OCI-LY7 (cell line): ENCODE measurements at regions of chr2 and their contacts with region 1.

Region 1: DNA sequence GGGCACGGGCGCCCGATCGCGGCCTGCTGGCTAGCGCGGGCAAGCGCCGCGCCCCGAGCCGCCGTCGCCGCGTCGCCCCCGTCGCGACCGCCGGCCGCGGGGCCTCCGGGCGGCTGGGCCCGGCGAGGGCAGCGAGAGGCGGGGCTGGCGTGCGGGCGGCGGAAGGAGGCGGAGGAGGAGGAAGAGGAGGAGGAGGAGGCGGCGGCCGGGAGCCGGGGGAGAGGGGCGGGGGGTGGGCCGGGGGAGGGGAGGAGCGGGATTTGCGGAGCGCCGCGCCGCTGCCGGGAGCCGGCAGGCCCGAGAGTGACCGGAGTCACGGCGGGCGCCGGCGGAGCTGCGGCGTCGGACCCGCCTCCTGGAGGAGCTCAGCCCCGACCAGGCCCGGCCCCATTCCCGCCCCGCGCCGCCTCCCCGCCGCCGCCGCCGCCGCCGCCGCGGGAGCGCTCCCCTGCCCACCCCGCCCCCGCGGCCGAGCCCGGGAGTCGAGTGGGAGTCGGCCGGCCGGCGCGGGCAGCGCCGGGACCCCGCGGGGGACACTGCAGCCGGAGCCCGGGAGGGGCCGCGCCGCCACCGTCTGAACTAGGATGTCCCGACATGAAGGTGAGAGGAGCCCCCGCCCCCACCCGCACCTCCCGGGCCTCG is at the start of gene KCMF1:
- DNase-seq: peak; percentile 72
- H3K4me3 ChIP-seq: peak within 1 kb of the TSS; percentile 82
- H3K27ac ChIP-seq: peak within 1 kb of the TSS; percentile 85
- H3K4me1 ChIP-seq: peaks cover 22% of the 10 kb centered on the region
- CTCF ChIP-seq: no peak
- total RNA-seq, gene KCMF1: 42.2 and 63.0 TPM in 2 replicates

Region 2: GRCh38 chr2:84946204-84947009 is 24.6 kb before region 1 on chr2:
- CTCF ChIA-PET with region 1: interaction called, 6 read pairs
- POLR2A ChIA-PET with region 1: interaction called, 107 read pairs
- intact Hi-C with region 1: loop called (anchors 1 kb)
- DNase-seq: peak; percentile 70
- H3K4me3 ChIP-seq: peak overlapping the region; percentile 42
- H3K27ac ChIP-seq: peak overlapping the region; percentile 75
- H3K4me1 ChIP-seq: peaks cover 41% of the 10 kb centered on the region
- CTCF ChIP-seq: peak; percentile 54

Region 3: DNA sequence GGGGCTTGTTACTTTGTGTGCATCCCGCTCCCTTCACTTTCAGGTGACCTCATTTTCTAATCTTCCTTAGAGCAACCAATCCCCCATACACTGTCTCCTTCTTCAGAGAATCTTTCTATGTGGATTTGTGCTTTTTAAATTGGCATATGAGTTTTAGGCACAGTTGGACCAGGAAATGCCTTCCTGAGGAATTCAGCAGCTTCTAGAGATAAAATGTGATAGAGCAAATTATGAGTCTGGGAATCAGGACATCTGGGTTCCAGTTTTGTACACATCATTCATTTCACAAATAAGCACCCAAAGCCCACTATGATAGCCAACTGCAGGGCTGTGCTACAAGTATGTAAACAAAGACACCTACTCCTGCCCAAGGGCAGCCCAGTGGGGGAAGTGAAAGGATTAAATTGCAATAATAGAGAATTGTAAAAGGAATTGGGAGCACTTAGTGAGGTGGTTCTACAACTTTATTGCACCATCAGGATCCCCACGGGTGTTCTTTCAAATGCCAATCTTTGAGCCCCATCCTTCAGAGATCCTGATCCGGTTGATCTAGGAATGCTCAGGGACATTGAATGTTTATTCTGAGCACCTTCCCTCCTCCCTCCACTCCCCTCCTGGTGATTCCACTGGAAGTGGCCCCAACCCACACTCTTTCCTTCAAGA is 11.4 kb before region 1 on chr2:
- CTCF ChIA-PET with region 1: interaction called, 3 read pairs
- POLR2A ChIA-PET with region 1: interaction called, 11 read pairs
- intact Hi-C with region 1: no loop called
- DNase-seq: no peak
- H3K4me3 ChIP-seq: no peak overlapping the region
- H3K27ac ChIP-seq: no peak overlapping the region
- H3K4me1 ChIP-seq: no peaks in the 10 kb centered on the region
- CTCF ChIP-seq: no peak

Region 4: DNA sequence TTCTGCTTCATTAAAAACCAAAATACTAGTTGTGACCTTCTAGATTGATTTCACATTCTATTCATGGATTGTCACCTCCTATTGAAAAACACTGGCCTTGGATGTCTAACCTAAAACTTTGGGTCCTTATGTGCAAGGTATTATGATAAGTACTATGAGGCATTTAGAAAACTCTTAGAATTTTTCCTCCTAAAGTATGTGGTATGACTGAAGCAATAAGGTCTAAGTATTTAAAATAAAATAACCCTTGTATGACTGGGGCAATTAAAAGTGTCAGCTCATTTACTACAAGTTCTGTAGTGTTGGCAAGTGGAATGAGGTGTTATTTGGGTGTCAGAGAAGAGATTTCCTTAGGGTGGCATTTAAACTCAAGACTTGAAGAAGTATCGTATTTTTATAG is 15.0 kb after region 1 on chr2:
- CTCF ChIA-PET with region 1: no interaction called
- POLR2A ChIA-PET with region 1: interaction called, 12 read pairs
- intact Hi-C with region 1: no loop called
- DNase-seq: no peak
- H3K4me3 ChIP-seq: no peak overlapping the region
- H3K27ac ChIP-seq: no peak overlapping the region
- H3K4me1 ChIP-seq: no peaks in the 10 kb centered on the region
- CTCF ChIP-seq: no peak

Region 5: DNA sequence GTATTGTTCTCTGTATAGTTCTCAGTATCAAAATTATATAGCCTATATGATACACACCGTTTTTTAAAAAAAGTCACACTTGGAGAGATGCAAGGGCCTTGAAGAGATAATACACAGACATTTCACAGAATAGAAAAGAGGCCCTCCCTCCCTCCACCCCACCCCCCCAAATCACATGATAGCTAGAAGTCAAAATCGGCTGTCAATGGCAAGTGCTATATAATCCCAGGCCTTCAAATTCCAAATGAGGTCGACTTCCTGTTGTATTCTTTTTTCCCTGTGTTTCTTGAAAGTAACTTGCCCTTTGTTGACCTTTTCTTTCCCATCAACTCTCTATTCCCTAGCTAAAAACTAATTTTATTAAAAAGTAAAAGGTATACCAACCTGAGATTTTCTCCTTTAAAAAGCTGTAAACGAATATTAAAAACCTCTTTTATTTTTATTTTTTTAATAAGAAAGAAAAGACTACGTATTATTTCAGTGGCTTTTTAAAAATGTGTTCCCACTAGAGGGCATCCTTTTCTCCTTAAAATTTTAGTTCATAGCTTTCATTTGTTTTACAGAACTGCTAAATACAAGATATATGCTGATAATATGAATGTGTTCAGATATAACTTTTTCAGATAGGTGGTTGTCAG is 46.5 kb after region 1 on chr2:
- CTCF ChIA-PET with region 1: interaction called, 4 read pairs
- POLR2A ChIA-PET with region 1: interaction called, 8 read pairs
- intact Hi-C with region 1: loop called (anchors 2 kb)
- DNase-seq: peak; percentile 9
- H3K4me3 ChIP-seq: no peak overlapping the region
- H3K27ac ChIP-seq: no peak overlapping the region
- H3K4me1 ChIP-seq: peaks cover 18% of the 10 kb centered on the region
- CTCF ChIP-seq: peak; percentile 84